ENCODE measurements at regions of chr9 and their contacts with region 1.

Region 1: DNA sequence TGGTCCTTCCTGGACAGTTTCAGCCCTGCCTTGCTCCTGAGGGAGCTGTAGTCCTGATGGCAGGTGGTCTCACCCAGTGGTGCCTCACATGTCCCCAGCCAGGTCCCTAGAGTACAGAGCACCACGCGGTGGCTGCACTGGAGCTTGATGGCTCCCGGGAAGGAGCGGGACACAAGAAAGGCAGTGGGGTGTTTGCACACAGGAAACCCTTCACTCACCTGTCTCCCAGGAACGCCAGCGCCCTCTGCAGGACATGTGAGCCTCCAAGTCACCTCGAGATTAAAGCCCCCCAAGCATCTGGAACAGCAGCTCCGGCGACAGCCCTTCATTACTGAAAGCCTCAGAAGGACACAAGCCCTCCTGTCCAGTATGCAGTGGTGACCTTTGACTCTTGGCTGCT is 19.9 kb upstream of the TMEM250 start:
- DNase-seq: peak; percentile 74
- H3K4me3 ChIP-seq: no peak overlapping the region
- H3K27ac ChIP-seq: no peak overlapping the region
- H3K4me1 ChIP-seq: no peaks in the 10 kb centered on the region
- CTCF ChIP-seq: peak; percentile 79

Region 2: GRCh38 chr9:135971892-135972291 is 166.7 kb before region 1 on chr9:
- CTCF ChIA-PET with region 1: no interaction called
- POLR2A ChIA-PET with region 1: no interaction called
- intact Hi-C with region 1: loop called (anchors 5 kb)
- DNase-seq: peak; percentile 75
- H3K4me3 ChIP-seq: no peak overlapping the region
- H3K27ac ChIP-seq: no peak overlapping the region
- H3K4me1 ChIP-seq: peaks cover 4% of the 10 kb centered on the region
- CTCF ChIP-seq: no peak

Region 3: DNA sequence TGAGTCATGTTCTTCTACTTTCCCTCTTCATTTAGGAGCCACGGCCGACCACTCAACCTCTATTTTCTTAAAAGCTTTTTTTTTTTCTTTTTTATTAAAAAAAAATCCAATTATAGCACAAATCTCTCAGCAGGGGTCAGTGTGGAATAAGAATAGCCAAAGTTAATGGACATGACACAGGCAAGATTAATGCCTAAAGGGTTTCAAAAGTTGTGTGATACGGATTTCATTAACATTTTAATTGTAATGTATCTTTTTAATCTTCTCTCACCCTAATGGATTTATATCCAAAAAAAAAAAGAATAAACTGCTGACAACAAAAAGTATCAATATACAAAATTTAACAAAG is 48.9 kb before region 1 on chr9:
- CTCF ChIA-PET with region 1: no interaction called
- POLR2A ChIA-PET with region 1: no interaction called
- intact Hi-C with region 1: loop called (anchors 1 kb)
- DNase-seq: peak; percentile 39
- H3K4me3 ChIP-seq: no peak overlapping the region
- H3K27ac ChIP-seq: no peak overlapping the region
- H3K4me1 ChIP-seq: peaks cover 14% of the 10 kb centered on the region
- CTCF ChIP-seq: peak; percentile 75